ENCODE measurements at regions of chr12 and their contacts with region 1.

Region 1: DNA sequence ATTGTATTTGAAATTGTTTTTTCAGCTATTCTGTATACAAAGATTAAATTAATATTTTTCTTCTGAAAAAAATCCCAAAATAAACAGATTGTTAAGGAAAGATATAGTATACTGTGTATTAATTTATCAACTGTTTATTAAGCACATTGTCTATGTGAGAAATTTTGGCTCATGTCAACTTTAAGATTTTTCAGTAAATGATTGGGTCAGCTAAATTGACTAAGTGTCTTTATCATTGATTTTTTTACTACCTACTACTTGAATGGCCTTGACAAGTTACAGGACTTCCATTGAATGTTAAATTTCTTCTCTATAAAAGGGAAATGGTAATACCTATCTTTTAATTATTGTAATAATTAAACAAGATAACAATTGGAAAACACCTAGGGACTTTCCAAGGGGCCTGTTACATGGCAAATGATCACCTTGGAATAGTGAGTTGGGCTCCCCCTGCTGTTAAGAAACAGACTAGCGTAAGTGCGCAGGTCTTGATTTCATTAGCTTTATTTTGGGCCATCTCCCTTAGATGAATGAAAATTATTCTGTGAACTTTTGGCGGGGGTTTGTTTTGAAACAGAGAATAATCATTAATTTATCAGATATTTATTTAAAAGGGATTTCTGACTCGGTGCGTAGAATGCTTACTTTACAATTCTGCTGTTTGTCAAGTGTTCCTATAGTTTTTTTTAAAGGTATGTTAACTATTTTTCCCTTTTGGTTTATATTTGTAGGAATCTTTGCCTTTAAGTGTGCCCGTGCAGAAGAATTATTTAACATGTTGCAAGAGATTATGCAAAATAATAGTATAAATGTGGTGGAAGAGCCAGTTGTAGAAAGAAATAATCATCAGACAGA is 14.5 kb upstream of the CCT2 start:
- DNase-seq: peak; percentile 48 to 71
- H3K4me3 ChIP-seq: no peak overlapping the region
- H3K4me1 ChIP-seq: no peaks in the 10 kb centered on the region
- H3K27me3 ChIP-seq: no peaks in the 10 kb centered on the region

Region 2: DNA sequence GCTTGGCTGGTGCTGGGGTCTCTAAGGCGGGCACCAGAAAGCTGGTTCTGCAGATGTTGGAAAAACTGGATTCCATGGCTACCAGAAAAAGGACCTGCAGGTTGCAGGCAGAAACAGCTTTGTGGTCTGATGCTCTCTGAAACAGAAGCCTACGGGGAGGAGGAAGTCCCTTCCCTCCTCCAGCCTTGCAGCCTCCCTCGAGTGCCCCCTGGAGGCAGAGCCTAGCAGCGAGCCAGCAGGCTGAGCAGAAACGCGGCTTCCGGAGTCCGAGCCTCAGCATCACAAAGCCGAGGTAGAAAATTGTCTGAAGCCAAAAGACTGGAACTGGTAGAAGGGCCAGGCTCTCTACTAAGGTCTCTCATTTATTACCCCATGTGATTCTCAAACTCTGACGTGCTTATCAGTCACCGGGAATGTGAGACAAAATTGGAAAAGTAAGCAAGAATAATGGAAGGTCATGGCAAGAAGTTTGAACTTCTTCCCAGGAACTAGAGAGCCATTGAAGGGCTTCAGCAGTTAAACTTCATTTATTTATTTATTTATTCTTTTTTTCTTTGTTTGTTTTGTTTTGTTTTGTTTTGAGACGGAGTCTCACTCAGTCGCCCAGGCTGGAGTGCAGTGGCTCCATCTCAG is 413.6 kb before region 1 on chr12:
- in situ Hi-C with region 1: loop called (anchors 10 kb)
- DNase-seq: peak; percentile 82 to 95
- H3K4me3 ChIP-seq: no peak overlapping the region
- H3K4me1 ChIP-seq: peaks cover 6% of the 10 kb centered on the region
- H3K27me3 ChIP-seq: no peaks in the 10 kb centered on the region

Region 3: DNA sequence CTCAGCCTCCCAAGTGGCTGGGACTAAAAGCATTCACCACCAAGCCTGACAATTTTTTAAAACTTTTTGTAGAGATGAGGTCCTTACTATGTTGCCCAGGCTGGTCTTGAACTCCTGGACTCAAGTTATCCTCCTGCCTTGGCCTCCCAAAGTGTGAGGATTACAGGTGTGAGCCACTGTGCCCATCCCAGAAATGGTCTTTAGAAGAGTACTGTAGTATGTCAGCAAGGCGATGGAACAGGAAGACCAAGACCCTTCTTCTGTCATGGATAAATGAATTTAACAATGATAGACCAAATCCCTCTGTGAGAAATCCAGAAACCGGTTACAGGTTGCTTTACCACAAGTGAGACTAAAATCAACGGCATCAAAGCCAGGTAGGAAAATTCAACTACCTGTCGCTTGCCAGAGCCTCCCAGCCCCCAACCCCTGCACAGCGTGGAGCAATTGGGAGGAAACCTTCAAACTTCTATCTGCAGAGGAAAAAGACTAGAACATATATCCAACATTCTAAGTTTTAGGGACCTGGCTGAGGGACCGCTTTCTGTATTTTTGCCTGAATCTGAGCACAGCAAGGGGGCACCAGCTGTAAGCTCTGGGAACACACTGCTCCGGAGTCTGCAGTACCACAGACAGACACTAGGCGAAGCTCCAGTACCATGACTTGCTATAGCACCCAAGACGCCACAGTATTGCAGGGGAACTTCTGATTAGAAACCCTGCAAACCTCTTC is 280.1 kb before region 1 on chr12:
- in situ Hi-C with region 1: no loop called
- DNase-seq: peak; percentile 77 to 89
- H3K4me3 ChIP-seq: no peak overlapping the region
- H3K4me1 ChIP-seq: no peaks in the 10 kb centered on the region
- H3K27me3 ChIP-seq: peaks cover 22% of the 10 kb centered on the region

Region 4: DNA sequence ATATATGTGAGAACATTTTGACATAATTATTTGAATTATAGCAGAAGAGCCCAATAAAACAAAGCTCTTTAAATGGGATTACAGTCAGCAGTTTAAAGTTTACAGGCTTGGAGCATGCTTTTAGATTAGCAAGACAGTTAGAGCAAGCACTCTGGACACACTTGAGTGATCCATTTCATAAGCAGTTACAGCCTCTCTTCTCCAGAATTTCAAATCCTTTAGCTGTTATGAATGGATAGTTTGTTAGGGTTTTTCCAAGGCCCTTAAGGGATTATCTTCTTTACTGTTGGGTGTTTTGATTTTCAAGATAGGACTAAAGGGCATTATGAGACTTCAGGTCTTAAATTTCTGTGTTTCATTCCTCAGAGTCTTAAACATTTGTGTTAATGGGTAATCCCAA is 92.0 kb after region 1 on chr12:
- in situ Hi-C with region 1: no loop called
- DNase-seq: peak; percentile 14 to 95
- H3K4me3 ChIP-seq: no peak overlapping the region
- H3K4me1 ChIP-seq: peaks cover 16% of the 10 kb centered on the region
- H3K27me3 ChIP-seq: peaks cover 48% of the 10 kb centered on the region

Region 5: GRCh38 chr12:69879041-69879960 is 308.5 kb after region 1 on chr12:
- in situ Hi-C with region 1: no loop called
- DNase-seq: peak; percentile 67 to 78
- H3K4me3 ChIP-seq: no peak overlapping the region
- H3K4me1 ChIP-seq: peaks cover 4% of the 10 kb centered on the region; the same call in 1 of the 2 replicates
- H3K27me3 ChIP-seq: no peaks in the 10 kb centered on the region

Measured in HAP-1 (cell line).